ENCODE measurements at regions of chr2 and their contacts with region 1.

Region 1: GRCh38 chr2:19362755-19363473 is 4.5 kb upstream of the OSR1 start:
- DNase-seq: peak; percentile 90
- ATAC-seq: peak; percentile 70
- H3K4me3 ChIP-seq: peak overlapping the region; percentile 89
- H3K27ac ChIP-seq: peak overlapping the region; percentile 21
- H3K4me1 ChIP-seq: peaks cover 23% of the 10 kb centered on the region
- H3K27me3 ChIP-seq: no peaks in the 10 kb centered on the region
- CTCF ChIP-seq: peak; percentile 89

Region 2: GRCh38 chr2:18387441-18388206 is 975.3 kb before region 1 on chr2:
- CTCF ChIA-PET with region 1: no interaction called
- POLR2A ChIA-PET with region 1: no interaction called
- intact Hi-C with region 1: loop called (anchors 1 kb)
- DNase-seq: peak; percentile 88
- ATAC-seq: peak; percentile 94
- H3K4me3 ChIP-seq: no peak overlapping the region
- H3K27ac ChIP-seq: no peak overlapping the region
- H3K4me1 ChIP-seq: no peaks in the 10 kb centered on the region
- H3K27me3 ChIP-seq: no peaks in the 10 kb centered on the region
- CTCF ChIP-seq: peak; percentile 95

Region 3: GRCh38 chr2:18520451-18521425 is 842.2 kb before region 1 on chr2:
- CTCF ChIA-PET with region 1: no interaction called
- POLR2A ChIA-PET with region 1: interaction called, 3 read pairs
- intact Hi-C with region 1: loop called (anchors 1 kb)
- DNase-seq: peak; percentile 88
- ATAC-seq: peak; percentile 68
- H3K4me3 ChIP-seq: no peak overlapping the region
- H3K27ac ChIP-seq: no peak overlapping the region
- H3K4me1 ChIP-seq: peaks cover 35% of the 10 kb centered on the region
- H3K27me3 ChIP-seq: no peaks in the 10 kb centered on the region
- CTCF ChIP-seq: peak; percentile 97

Region 4: DNA sequence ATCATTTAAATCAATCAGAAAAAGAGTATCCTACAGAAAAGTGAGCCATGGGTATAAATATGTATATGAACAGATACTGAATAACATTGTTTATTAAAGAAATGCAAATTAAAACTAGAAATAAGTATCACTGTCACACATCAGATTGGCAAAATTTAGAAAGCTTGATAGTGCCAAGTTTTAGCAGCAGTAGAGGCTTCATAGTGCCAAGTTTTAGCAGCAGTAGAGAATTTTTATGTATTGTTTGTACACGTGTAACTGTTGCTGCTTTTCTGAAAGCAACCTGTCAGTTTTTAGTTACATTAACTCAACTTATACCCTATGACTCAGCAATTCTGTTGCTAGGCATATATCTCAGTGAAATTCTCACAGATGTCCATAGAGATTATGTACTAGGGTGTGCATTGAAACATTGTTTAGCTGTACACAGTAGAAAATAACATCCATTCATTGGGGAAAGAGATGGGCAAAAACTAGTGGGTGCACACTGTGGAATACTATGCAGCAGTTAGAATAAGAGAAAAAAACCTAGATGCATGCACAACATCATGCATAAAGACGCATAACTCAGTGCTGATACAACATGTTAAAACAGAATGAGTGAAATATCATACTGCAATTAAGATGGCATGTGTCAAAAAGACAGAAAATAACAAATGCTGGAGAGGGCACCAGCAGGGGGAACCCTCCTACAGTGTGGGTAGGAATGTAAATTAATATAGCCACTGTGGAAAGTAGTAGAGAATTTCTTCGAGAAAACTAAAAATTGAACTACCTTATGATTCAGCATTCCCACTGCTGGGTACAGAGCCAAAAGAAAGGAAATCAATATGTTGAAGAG is 479.1 kb before region 1 on chr2:
- CTCF ChIA-PET with region 1: no interaction called
- POLR2A ChIA-PET with region 1: no interaction called
- intact Hi-C with region 1: loop called (anchors 2 kb)
- DNase-seq: peak; percentile 69
- ATAC-seq: peak; percentile 60
- H3K4me3 ChIP-seq: no peak overlapping the region
- H3K27ac ChIP-seq: no peak overlapping the region
- H3K4me1 ChIP-seq: 0 out of 2 replicates have a peak, but pooled peaks cover 9% of the 10 kb centered on the region
- H3K27me3 ChIP-seq: no peaks in the 10 kb centered on the region
- CTCF ChIP-seq: peak; percentile 85

Region 5: DNA sequence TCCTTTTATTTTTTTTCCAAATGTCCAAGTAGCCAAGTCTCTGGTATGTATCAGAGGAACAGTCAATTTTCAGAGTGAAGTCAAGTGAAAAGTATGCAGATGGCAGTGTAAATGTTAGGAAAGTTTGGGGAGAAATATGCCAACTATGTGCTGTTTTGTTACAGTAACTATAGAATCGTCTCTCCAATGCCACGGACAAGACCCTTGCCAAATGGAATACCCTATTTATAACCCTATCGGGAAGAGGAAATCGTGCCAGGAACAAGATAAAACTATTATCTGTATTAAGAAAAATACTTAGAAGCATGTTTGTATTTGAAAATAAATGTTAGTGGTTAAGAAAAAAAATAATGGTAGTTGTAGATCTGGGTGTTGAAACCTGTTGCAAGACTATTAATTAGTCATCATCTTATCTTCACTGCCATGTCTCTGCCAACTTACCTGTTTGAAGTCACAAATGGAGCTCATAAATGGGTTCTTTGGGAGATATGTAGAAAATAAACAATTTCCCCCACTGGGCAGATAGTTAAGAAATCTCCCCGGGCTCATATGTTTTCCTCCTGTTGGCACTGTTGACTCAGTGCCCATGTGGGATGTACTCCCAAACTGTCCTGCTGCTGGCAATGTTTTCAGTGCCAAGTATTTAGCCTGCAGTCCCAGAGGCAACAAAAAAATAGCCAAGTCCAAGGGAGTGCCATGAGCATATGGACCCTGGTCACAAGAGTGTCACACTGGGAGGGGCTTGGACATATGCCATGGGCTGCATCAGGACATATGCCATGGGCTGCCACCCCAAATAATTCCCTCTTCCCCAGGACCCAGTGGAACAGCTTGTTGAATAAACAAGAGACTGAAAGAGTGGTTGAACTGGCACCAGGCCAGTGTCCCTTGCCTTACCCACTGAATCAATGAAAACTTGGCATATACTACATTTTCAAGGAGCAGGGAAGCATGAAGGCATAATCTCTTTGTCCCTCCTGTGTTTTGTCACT is 371.4 kb before region 1 on chr2:
- CTCF ChIA-PET with region 1: no interaction called
- POLR2A ChIA-PET with region 1: no interaction called
- intact Hi-C with region 1: loop called (anchors 1 kb)
- DNase-seq: peak; percentile 94
- ATAC-seq: peak; percentile 84
- H3K4me3 ChIP-seq: peak overlapping the region; percentile 33; the same call in 1 of the 2 replicates
- H3K27ac ChIP-seq: peak overlapping the region; percentile 80
- H3K4me1 ChIP-seq: peaks cover 33% of the 10 kb centered on the region
- H3K27me3 ChIP-seq: no peaks in the 10 kb centered on the region
- CTCF ChIP-seq: no peak

Region 6: GRCh38 chr2:19140596-19141219 is 222.2 kb before region 1 on chr2:
- CTCF ChIA-PET with region 1: no interaction called
- POLR2A ChIA-PET with region 1: interaction called, 3 read pairs
- intact Hi-C with region 1: loop called (anchors 2 kb)
- DNase-seq: peak; percentile 99
- ATAC-seq: peak; percentile 94
- H3K4me3 ChIP-seq: peak overlapping the region; percentile 4; the same call in 1 of the 2 replicates
- H3K27ac ChIP-seq: peak overlapping the region; percentile 85
- H3K4me1 ChIP-seq: peaks cover 55% of the 10 kb centered on the region
- H3K27me3 ChIP-seq: no peaks in the 10 kb centered on the region
- CTCF ChIP-seq: no peak

Region 7: GRCh38 chr2:19176955-19177354 is 186.0 kb before region 1 on chr2:
- CTCF ChIA-PET with region 1: no interaction called
- POLR2A ChIA-PET with region 1: no interaction called
- intact Hi-C with region 1: no loop called
- DNase-seq: peak; percentile 79
- ATAC-seq: peak; percentile 48
- H3K4me3 ChIP-seq: no peak overlapping the region
- H3K27ac ChIP-seq: peak overlapping the region; percentile 31
- H3K4me1 ChIP-seq: peaks cover 17% of the 10 kb centered on the region
- H3K27me3 ChIP-seq: no peaks in the 10 kb centered on the region
- CTCF ChIP-seq: no peak

Region 8: GRCh38 chr2:19321946-19322345 is 41.0 kb before region 1 on chr2:
- CTCF ChIA-PET with region 1: no interaction called
- POLR2A ChIA-PET with region 1: no interaction called
- intact Hi-C with region 1: no loop called
- DNase-seq: no peak
- ATAC-seq: no peak
- H3K4me3 ChIP-seq: no peak overlapping the region
- H3K27ac ChIP-seq: no peak overlapping the region
- H3K4me1 ChIP-seq: no peaks in the 10 kb centered on the region
- H3K27me3 ChIP-seq: no peaks in the 10 kb centered on the region
- CTCF ChIP-seq: no peak

Region 9: DNA sequence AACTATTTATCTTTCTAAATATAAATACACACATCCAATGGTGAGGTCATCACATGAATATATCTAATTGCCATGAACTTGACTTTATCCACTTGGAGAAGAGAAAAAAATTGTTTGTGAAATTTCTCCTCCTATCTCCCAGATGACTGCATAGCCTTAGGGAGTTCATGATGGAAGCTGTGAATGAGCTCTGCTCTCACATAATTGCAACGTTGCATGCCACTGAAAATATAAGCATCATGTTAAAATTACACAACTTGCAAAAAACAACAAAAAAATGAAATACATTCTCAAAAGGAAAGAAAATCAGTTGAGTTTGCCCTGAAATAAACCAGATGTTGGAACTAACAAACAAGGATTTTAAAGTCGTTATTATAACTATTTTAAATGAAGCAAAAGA is 46.1 kb after region 1 on chr2:
- CTCF ChIA-PET with region 1: no interaction called
- POLR2A ChIA-PET with region 1: no interaction called
- intact Hi-C with region 1: no loop called
- DNase-seq: no peak
- ATAC-seq: no peak
- H3K4me3 ChIP-seq: no peak overlapping the region
- H3K27ac ChIP-seq: no peak overlapping the region
- H3K4me1 ChIP-seq: no peaks in the 10 kb centered on the region
- H3K27me3 ChIP-seq: no peaks in the 10 kb centered on the region
- CTCF ChIP-seq: no peak

Region 10: GRCh38 chr2:19538405-19538963 is 175.6 kb after region 1 on chr2:
- CTCF ChIA-PET with region 1: no interaction called
- POLR2A ChIA-PET with region 1: no interaction called
- intact Hi-C with region 1: loop called (anchors 2 kb)
- DNase-seq: peak; percentile 99
- ATAC-seq: peak; percentile 73
- H3K4me3 ChIP-seq: 0 out of 2 replicates have a peak overlapping the region, but pooled peaks have one; percentile 31
- H3K27ac ChIP-seq: peak overlapping the region; percentile 98
- H3K4me1 ChIP-seq: peaks cover 57% of the 10 kb centered on the region
- H3K27me3 ChIP-seq: no peaks in the 10 kb centered on the region
- CTCF ChIP-seq: no peak

Measured in PC-3 (cell line).